Activated CD8-positive, alpha-beta T cell treated with anti-CD3 and anti-CD28 coated beads for 36 hours (primary cell): ENCODE measurements at regions of chr10 and their contacts with region 1.

Region 1: GRCh38 chr10:73940634-73941221 is 29.8 kb downstream of the PLAU start:
- DNase-seq: peak; percentile 88
- ATAC-seq: peak; percentile 99
- H3K4me3 Mint-ChIP-seq: no peak overlapping the region
- H3K27ac Mint-ChIP-seq: no peak overlapping the region
- H3K4me1 Mint-ChIP-seq: peaks cover 5% of the 10 kb centered on the region
- H3K27me3 Mint-ChIP-seq: peaks cover 9% of the 10 kb centered on the region
- CTCF ChIP-seq: peak; percentile 99

Region 2: GRCh38 chr10:73857446-73857845 is 83.3 kb before region 1 on chr10:
- CTCF ChIA-PET with region 1: interaction called, 18 read pairs
- POLR2A ChIA-PET with region 1: no interaction called
- intact Hi-C with region 1: no loop called
- DNase-seq: peak; percentile 64
- ATAC-seq: peak; percentile 86
- H3K4me3 Mint-ChIP-seq: peak overlapping the region; percentile 19
- H3K27ac Mint-ChIP-seq: peak overlapping the region; percentile 72
- H3K4me1 Mint-ChIP-seq: peaks cover 54% of the 10 kb centered on the region
- H3K27me3 Mint-ChIP-seq: no peaks in the 10 kb centered on the region
- CTCF ChIP-seq: no peak

Region 3: DNA sequence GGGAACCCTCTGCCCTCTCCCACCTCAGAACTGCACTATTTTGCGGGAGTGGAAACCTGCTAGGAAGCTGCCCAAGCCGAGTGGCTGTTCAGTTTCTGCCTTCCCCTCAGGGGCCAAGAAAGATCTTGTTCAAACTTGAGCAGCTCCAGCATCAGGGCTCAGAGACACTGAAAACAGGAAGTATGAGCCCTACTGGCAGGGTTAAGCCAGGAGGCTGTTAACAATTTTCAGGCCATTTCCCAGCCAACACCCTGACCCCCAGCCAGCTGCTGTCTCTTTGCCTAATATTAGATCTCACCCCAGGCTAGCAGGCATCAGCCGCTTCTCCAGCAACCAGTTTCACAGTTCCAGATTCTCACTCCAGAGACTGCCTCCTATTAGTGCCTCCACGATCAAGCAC is 20.6 kb before region 1 on chr10:
- CTCF ChIA-PET with region 1: interaction called, 36 read pairs
- POLR2A ChIA-PET with region 1: no interaction called
- intact Hi-C with region 1: no loop called
- DNase-seq: no peak
- ATAC-seq: no peak
- H3K4me3 Mint-ChIP-seq: no peak overlapping the region
- H3K27ac Mint-ChIP-seq: no peak overlapping the region
- H3K4me1 Mint-ChIP-seq: peaks cover 23% of the 10 kb centered on the region
- H3K27me3 Mint-ChIP-seq: peaks cover 39% of the 10 kb centered on the region
- CTCF ChIP-seq: no peak

Region 4: DNA sequence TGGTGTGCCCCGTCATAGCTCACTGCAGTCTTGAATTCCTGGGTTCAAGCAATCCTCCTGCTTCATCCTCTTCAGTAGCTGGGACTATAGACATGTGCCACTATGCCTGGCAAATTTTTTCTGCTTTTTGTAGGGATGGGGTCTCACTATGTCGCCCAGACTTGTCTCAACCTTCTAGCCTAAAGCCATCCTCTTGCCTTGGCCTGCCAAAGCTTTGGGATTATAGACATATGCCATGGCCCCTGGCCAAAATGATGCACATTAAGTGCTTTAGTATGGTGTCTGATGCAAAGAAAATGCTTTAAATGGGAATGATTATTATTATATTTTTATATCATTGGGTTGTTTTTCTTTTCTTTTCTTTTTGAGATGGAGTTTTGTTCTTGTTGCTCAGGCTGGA is 24.0 kb after region 1 on chr10:
- CTCF ChIA-PET with region 1: interaction called, 77 read pairs
- POLR2A ChIA-PET with region 1: no interaction called
- intact Hi-C with region 1: no loop called
- DNase-seq: no peak
- ATAC-seq: no peak
- H3K4me3 Mint-ChIP-seq: no peak overlapping the region
- H3K27ac Mint-ChIP-seq: no peak overlapping the region
- H3K4me1 Mint-ChIP-seq: peaks cover 9% of the 10 kb centered on the region
- H3K27me3 Mint-ChIP-seq: no peaks in the 10 kb centered on the region
- CTCF ChIP-seq: no peak

Region 5: DNA sequence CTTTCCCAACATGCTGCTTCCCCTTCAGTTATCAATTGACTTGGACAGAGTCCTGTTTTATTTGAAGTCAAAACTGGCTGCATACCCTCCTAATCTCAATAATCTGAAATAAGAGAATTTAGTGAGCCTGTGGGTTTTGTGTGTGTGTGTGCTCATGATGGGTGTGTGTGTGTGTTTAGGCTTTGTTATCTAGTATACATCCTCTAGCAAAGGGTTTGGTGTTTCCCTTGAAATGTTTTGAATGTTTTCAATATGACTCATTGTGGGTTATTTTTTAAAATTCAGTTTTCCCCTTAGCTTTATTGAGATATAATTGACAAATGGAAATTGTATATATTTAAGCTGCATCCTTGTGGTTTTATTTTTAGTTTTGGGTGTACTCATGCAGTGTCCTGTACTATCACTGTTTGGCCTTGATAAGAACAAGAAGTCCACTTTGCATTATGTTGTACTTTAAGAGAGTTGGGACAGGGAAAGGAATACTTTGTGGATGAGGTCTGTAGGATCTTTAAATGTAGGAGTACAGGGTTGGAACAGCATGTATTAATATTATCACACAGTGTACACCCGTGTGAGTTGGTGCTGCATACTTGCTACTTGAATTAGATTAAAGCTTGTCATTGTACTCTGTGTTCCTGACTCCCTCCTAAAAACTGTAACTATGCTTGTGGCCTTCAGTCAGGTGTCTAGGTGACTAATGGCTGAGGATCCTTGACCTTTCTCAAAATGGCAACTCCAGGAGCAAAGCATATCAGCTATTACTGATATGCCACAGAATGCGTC is 115.5 kb after region 1 on chr10:
- CTCF ChIA-PET with region 1: interaction called, 10 read pairs
- POLR2A ChIA-PET with region 1: no interaction called
- intact Hi-C with region 1: no loop called
- DNase-seq: peak; percentile 38
- ATAC-seq: peak; percentile 83
- H3K4me3 Mint-ChIP-seq: peak overlapping the region; percentile 46
- H3K27ac Mint-ChIP-seq: peak overlapping the region; percentile 89
- H3K4me1 Mint-ChIP-seq: peaks cover 30% of the 10 kb centered on the region
- H3K27me3 Mint-ChIP-seq: no peaks in the 10 kb centered on the region
- CTCF ChIP-seq: no peak

Region 6: GRCh38 chr10:74156919-74157289 is 216.2 kb after region 1 on chr10:
- CTCF ChIA-PET with region 1: no interaction called
- POLR2A ChIA-PET with region 1: no interaction called
- intact Hi-C with region 1: no loop called
- DNase-seq: no peak
- ATAC-seq: no peak
- H3K4me3 Mint-ChIP-seq: no peak overlapping the region
- H3K27ac Mint-ChIP-seq: no peak overlapping the region
- H3K4me1 Mint-ChIP-seq: peaks cover 22% of the 10 kb centered on the region
- H3K27me3 Mint-ChIP-seq: no peaks in the 10 kb centered on the region
- CTCF ChIP-seq: no peak